Activated CD4-positive, alpha-beta memory T cell treated with anti-CD3 and anti-CD28 coated beads, Interleukin-2, amount 10 ng/mL, durations not matched to agents 7 days and 5 days (primary cell): ENCODE measurements at regions of chr15 and their contacts with region 1.

Region 1: GRCh38 chr15:90001683-90002427 is 731 bp downstream of the ZNF710 start:
- DNase-seq: peak; percentile 69
- H3K4me3 Mint-ChIP-seq: peak overlapping the region; percentile 84
- H3K27ac Mint-ChIP-seq: peak overlapping the region; percentile 72
- H3K4me1 Mint-ChIP-seq: peaks cover 62% of the 10 kb centered on the region
- H3K27me3 Mint-ChIP-seq: no peaks in the 10 kb centered on the region

Region 2: GRCh38 chr15:90013503-90013937 is 11.7 kb after region 1 on chr15:
- CTCF ChIA-PET with region 1: interaction called, 6 read pairs
- POLR2A ChIA-PET with region 1: interaction called, 33 read pairs
- DNase-seq: no peak
- H3K4me3 Mint-ChIP-seq: peak overlapping the region; percentile 44
- H3K27ac Mint-ChIP-seq: peak overlapping the region; percentile 86
- H3K4me1 Mint-ChIP-seq: peaks cover 52% of the 10 kb centered on the region
- H3K27me3 Mint-ChIP-seq: no peaks in the 10 kb centered on the region

Region 3: GRCh38 chr15:90031231-90031791 is 29.5 kb after region 1 on chr15:
- CTCF ChIA-PET with region 1: no interaction called
- POLR2A ChIA-PET with region 1: interaction called, 10 read pairs
- DNase-seq: peak; percentile 31
- H3K4me3 Mint-ChIP-seq: no peak overlapping the region
- H3K27ac Mint-ChIP-seq: peak overlapping the region; percentile 80
- H3K4me1 Mint-ChIP-seq: peaks cover 63% of the 10 kb centered on the region
- H3K27me3 Mint-ChIP-seq: no peaks in the 10 kb centered on the region